ENCODE measurements at regions of chr1 and their contacts with region 1.

Region 1: DNA sequence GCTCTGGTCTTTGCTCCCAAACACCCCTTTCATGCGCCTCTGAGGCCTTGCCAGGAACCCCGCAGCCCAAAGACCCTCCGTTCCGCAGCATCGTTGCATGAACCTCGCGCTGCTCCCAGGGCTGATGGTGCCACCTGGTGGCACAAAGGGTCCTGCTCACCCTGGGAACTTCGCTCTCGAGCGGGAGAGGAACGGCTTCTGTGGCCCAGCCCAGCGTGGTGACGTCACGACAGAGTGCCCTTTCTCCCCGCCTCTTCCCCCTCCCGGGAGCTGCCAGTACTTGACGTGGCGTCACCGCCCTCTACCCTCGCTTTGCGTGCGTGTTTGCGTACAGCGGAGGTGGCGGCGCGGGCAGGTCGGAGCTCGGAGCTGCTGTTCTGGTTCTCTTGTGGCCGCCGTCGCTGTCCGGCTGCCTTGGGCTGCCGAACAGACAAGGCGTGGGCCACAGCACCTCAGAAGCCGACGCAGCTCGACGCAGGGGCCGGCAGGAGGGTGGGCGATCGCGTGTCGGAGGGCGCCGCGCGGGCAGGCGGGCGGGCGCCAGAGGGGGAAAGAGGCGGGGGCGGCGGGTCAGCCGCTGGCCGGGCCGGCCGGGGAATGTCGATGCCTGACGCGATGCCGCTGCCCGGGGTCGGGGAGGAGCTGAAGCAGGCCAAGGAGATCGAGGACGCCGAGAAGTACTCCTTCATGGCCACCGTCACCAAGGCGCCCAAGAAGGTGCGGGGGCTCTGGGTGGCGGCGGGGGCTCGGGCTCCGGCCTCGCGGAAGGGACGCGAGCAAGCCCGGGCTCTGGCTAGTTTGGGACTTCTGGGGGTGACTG is at the start of gene AHCYL1:
- DNase-seq: peak; percentile 95
- ATAC-seq: peak; percentile 90
- H3K4me3 ChIP-seq: peak within 1 kb of the TSS; percentile 81 to 94 (median 94)
- H3K27ac ChIP-seq: peak within 1 kb of the TSS; percentile 87
- H3K4me1 ChIP-seq: peaks cover 86% of the 10 kb centered on the region
- H3K27me3 ChIP-seq: no peaks in the 10 kb centered on the region; a peak in 1 of 5 replicates
- CTCF ChIP-seq: peak; percentile 100
- EP300 ChIP-seq: no peak; a peak in 1 of 4 replicates
- POLR2A ChIP-seq: peak; percentile 83 to 91
- RAD21 ChIP-seq: peak; percentile 98
- total RNA-seq, gene AHCYL1: 40.9 and 63.2 TPM in 2 replicates

Region 2: GRCh38 chr1:109718491-109718890 is 266.2 kb before region 1 on chr1:
- CTCF ChIA-PET with region 1: no interaction called
- POLR2A ChIA-PET with region 1: no interaction called
- in situ Hi-C with region 1: no loop called
- intact Hi-C with region 1: loop called (anchors 10 kb)
- DNase-seq: peak; percentile 65
- ATAC-seq: peak; percentile 93
- H3K4me3 ChIP-seq: no peak overlapping the region
- H3K27ac ChIP-seq: no peak overlapping the region
- H3K4me1 ChIP-seq: no peaks in the 10 kb centered on the region
- H3K27me3 ChIP-seq: peaks cover 3 to 35% of the 10 kb centered on the region in 2 experiments; a peak in 3 of 5 replicates
- CTCF ChIP-seq: peak; percentile 75
- EP300 ChIP-seq: no peak
- POLR2A ChIP-seq: no peak
- RAD21 ChIP-seq: 0 out of 2 replicates have a peak, but pooled peaks have one; percentile 25

Region 3: GRCh38 chr1:109773146-109773899 is 211.3 kb before region 1 on chr1:
- CTCF ChIA-PET with region 1: interaction called, 48 read pairs
- POLR2A ChIA-PET with region 1: interaction called, 19 read pairs
- in situ Hi-C with region 1: loop called (anchors 5 kb)
- intact Hi-C with region 1: loop called (anchors 1 kb)
- DNase-seq: peak; percentile 78
- ATAC-seq: peak; percentile 86
- H3K4me3 ChIP-seq: no peak overlapping the region
- H3K27ac ChIP-seq: no peak overlapping the region
- H3K4me1 ChIP-seq: peaks cover 42% of the 10 kb centered on the region
- H3K27me3 ChIP-seq: peaks cover 2 to 19% of the 10 kb centered on the region in 2 experiments; a peak in 3 of 5 replicates
- CTCF ChIP-seq: peak; percentile 98
- EP300 ChIP-seq: no peak
- POLR2A ChIP-seq: no peak
- RAD21 ChIP-seq: peak; percentile 96

Region 4: GRCh38 chr1:109923131-109923945 is 61.3 kb before region 1 on chr1:
- CTCF ChIA-PET with region 1: interaction called, 36 read pairs
- POLR2A ChIA-PET with region 1: interaction called, 4 read pairs
- in situ Hi-C with region 1: loop called (anchors 5 kb)
- intact Hi-C with region 1: loop called (anchors 1 kb)
- DNase-seq: no peak
- ATAC-seq: peak; percentile 83
- H3K4me3 ChIP-seq: no peak overlapping the region
- H3K27ac ChIP-seq: no peak overlapping the region
- H3K4me1 ChIP-seq: peaks cover 25% of the 10 kb centered on the region
- H3K27me3 ChIP-seq: no peaks in the 10 kb centered on the region
- CTCF ChIP-seq: peak; percentile 80
- EP300 ChIP-seq: no peak
- POLR2A ChIP-seq: no peak
- RAD21 ChIP-seq: peak; percentile 85

Region 5: GRCh38 chr1:109959974-109960744 is 24.5 kb before region 1 on chr1:
- CTCF ChIA-PET with region 1: interaction called, 17 read pairs
- POLR2A ChIA-PET with region 1: interaction called, 67 read pairs
- in situ Hi-C with region 1: no loop called
- intact Hi-C with region 1: loop called (anchors 1 kb)
- DNase-seq: peak; percentile 96
- ATAC-seq: peak; percentile 93
- H3K4me3 ChIP-seq: peak overlapping the region; percentile 4 to 34 (median 23); a peak in 1 of 6 replicates
- H3K27ac ChIP-seq: peak overlapping the region; percentile 93
- H3K4me1 ChIP-seq: peaks cover 49% of the 10 kb centered on the region
- H3K27me3 ChIP-seq: no peaks in the 10 kb centered on the region
- CTCF ChIP-seq: peak; percentile 57
- EP300 ChIP-seq: peak; percentile 32 to 86; a peak in 3 of 4 replicates
- POLR2A ChIP-seq: no peak
- RAD21 ChIP-seq: peak; percentile 51; the same call in 1 of the 2 replicates